ENCODE measurements at regions of chr9 and their contacts with region 1.

Region 1: GRCh38 chr9:114397848-114398605 is 10.2 kb upstream of the AKNA start:
- DNase-seq: peak; percentile 96
- ATAC-seq: peak; percentile 78
- H3K4me3 Mint-ChIP-seq: peak overlapping the region; percentile 89
- H3K27ac Mint-ChIP-seq: peak overlapping the region; percentile 94
- H3K4me1 Mint-ChIP-seq: peaks cover 49% of the 10 kb centered on the region
- H3K27me3 Mint-ChIP-seq: no peaks in the 10 kb centered on the region
- CTCF ChIP-seq: no peak

Region 2: DNA sequence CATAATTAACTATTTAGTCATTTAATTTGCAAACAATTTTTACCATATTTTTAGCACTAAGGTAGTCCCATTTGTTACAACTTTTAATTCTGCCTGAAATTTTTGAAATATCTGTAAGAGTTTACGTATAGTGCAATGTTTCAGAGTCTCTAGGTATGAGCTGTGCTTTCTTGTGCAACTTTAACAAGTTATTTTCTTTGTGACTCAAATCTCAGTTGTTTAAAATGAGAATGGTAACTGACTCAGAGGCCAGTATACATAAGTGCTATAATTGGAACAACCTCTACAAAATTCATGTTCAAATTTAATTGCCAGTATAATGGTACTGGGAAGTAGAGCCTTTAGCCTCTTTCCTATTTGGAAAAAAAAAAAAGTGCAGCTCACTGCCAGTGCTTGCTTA is 1371.8 kb before region 1 on chr9:
- CTCF ChIA-PET with region 1: no interaction called
- POLR2A ChIA-PET with region 1: no interaction called
- intact Hi-C with region 1: no loop called
- DNase-seq: no peak
- ATAC-seq: no peak
- H3K4me3 Mint-ChIP-seq: no peak overlapping the region
- H3K27ac Mint-ChIP-seq: no peak overlapping the region
- H3K4me1 Mint-ChIP-seq: no peaks in the 10 kb centered on the region
- H3K27me3 Mint-ChIP-seq: peaks cover 6% of the 10 kb centered on the region
- CTCF ChIP-seq: no peak

Region 3: DNA sequence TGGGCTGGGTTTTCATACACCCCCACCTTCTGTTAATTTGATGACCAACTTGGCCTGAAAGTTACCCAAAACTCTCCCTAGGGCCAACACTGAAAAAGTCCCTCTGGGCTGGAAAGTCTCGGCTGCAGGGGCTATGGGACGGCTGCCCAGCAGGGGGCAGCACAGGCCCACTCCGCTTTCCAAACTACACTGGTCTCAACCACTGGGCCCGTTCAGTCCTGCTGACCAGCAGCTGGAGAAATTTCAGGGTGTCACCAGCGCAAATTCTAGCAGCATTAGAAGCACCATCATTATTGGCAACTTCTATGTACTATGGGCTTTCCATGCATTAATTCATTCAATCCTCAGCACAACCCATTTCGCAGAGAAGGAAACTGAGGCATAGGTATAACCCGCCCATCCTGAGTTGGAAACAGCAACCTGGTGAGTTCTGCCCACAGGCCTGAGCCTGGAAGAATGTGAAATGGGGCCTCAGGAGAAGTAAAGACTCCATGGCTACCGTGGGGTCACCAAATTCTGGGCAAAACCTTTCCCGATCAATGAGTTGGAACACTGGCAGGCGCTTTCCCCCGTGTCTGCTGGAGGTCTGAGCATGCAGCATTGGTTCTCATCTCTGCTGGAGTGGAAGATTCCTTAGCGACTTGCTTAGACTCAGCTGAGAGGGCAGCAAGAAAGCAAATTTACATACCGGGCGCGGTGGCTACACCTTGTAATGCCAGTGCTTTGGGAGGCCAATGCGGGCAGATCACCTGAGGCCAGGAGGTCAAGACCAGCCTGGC is 58.7 kb before region 1 on chr9:
- CTCF ChIA-PET with region 1: interaction called, 8 read pairs
- POLR2A ChIA-PET with region 1: interaction called, 14 read pairs
- intact Hi-C with region 1: loop called (anchors 1 kb)
- DNase-seq: peak; percentile 68
- ATAC-seq: peak; percentile 79
- H3K4me3 Mint-ChIP-seq: peak overlapping the region; percentile 6
- H3K27ac Mint-ChIP-seq: peak overlapping the region; percentile 74
- H3K4me1 Mint-ChIP-seq: peaks cover 32% of the 10 kb centered on the region
- H3K27me3 Mint-ChIP-seq: no peaks in the 10 kb centered on the region
- CTCF ChIP-seq: peak; percentile 87

Region 4: DNA sequence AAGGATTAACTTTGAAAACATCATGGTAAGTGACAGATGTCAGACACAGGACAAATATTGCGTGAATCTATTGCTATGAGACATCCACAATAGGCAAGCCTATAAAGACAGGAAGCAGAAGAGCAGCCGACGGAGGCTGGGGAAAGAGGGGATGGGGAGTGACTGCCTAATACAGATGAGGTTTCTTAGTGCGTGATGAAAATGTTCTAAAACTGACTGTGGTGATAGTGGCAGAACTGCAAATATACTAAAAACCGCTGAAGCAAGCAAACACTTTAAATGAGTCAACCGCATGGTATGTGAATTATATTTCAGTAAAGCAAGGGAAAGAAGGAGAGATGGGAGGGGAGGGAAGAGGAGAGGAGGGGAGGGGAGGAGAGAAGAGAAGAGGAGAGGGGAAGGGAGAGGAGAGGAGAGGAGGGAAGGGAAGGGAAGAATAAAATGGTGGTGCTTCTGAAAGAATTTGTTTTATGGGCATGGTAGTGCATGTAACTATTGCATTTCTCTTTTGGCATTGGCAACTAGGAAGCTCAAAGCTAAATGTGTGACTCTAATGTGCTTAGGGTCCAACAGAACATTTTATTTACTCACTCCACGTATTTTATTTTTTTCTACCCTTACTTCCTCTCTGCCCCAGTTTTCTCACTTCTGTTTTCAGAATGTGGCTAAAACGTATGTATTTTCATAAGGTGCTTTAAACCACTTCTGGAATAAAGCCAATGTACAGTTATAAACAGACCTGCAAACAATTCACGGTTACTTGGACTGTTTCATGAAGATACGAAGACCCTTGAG is 31.5 kb before region 1 on chr9:
- CTCF ChIA-PET with region 1: interaction called, 4 read pairs
- POLR2A ChIA-PET with region 1: interaction called, 913 read pairs
- intact Hi-C with region 1: loop called (anchors 1 kb)
- DNase-seq: no peak
- ATAC-seq: peak; percentile 41
- H3K4me3 Mint-ChIP-seq: peak overlapping the region; percentile 69
- H3K27ac Mint-ChIP-seq: peak overlapping the region; percentile 91
- H3K4me1 Mint-ChIP-seq: peaks cover 90% of the 10 kb centered on the region
- H3K27me3 Mint-ChIP-seq: no peaks in the 10 kb centered on the region
- CTCF ChIP-seq: no peak

Region 5: DNA sequence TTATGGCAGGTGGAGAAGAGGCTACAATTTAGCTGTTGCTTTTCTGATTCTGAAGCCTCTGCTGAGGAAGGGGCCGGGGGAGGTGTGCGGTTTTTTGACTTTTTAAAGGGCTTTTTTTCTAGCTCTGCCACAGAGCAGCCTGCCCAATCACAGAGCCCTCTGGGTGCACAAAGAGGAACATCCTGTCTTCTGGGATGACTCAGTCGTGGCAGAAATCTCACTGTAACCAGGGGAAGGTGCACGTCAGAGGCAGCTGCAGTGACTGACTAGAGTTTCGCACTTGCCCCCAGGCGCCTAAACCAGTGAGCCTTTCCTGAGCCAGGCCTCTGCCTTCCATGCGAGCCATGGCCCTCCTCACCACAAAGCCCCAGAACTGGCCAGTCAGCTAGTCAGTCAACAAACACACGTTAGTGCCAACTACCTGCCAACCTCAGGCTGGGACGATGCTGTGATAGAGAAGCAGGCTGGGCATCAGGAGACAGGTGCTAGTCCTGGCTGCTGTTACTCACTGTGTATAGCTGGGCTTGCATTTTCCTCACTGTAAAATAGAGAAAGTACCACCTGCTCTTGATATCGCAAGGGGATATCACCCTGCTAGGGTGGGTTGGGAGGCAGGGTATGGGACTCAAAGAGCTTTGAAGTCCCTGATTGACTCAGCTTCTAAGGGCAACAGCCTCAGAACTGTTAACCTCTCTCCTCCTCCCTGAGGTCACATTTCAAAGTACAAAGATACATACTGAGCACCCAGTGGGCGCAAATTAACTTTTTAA is 12.4 kb before region 1 on chr9:
- CTCF ChIA-PET with region 1: interaction called, 11 read pairs
- POLR2A ChIA-PET with region 1: interaction called, 311 read pairs
- intact Hi-C with region 1: loop called (anchors 1 kb)
- DNase-seq: peak; percentile 71
- ATAC-seq: peak; percentile 77
- H3K4me3 Mint-ChIP-seq: peak overlapping the region; percentile 97
- H3K27ac Mint-ChIP-seq: peak overlapping the region; percentile 93
- H3K4me1 Mint-ChIP-seq: peaks cover 85% of the 10 kb centered on the region
- H3K27me3 Mint-ChIP-seq: no peaks in the 10 kb centered on the region
- CTCF ChIP-seq: no peak

Region 6: DNA sequence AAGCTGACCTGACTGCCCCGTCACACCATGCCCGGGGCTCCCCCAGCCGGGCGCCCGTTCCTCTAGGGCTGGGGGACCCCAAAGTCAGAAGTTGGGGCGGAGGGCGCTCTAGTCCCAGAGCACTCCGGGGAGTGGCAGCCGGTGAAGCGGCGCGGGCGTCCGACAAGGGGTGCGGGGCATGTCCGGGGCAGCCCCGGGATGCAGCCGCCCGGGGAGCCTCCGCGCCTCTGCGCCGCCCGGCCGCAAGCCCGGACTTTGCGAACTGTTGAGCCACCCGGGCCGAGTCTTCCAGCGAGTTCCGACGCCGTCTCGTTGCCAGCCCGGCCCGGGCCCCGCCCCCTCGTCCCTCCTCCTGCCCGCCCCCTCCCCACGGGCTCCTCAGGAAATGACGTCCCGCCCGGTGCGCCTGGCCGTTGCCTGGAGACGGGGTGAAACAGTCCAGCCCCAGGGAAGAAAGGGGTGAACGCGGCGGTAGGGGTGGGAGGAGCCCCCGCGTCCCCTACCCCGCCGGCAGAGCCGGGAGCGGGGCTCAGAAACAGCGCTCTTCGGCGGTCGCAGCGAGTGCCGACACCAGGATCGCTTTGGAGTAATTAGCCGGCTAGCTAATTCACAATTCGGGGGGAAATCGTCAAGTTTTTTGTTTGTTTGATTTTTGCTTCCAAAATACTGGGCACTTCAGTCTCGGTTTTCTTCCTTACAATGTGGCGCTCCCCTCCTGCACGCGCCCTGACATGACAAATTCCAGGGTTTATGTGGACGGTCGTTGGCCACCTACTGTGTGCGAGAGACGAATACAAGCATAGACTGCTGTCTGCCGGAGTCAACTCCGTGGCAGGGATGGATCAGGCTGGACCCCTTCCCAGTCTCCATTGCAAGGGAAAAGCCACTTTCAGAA is 107.4 kb after region 1 on chr9 and contains the start of gene WHRN:
- CTCF ChIA-PET with region 1: interaction called, 3 read pairs
- POLR2A ChIA-PET with region 1: interaction called, 5 read pairs
- intact Hi-C with region 1: loop called (anchors 1 kb)
- DNase-seq: peak; percentile 84
- ATAC-seq: peak; percentile 85
- H3K4me3 Mint-ChIP-seq: peak within 1 kb of the TSS; percentile 86
- H3K27ac Mint-ChIP-seq: peak within 1 kb of the TSS; percentile 79
- H3K4me1 Mint-ChIP-seq: peaks cover 51% of the 10 kb centered on the region
- H3K27me3 Mint-ChIP-seq: peaks cover 8% of the 10 kb centered on the region
- CTCF ChIP-seq: no peak
- total RNA-seq, gene WHRN: 12.4 and 14.5 TPM in 2 replicates

Region 7: GRCh38 chr9:114616653-114617520 is 218.9 kb after region 1 on chr9:
- CTCF ChIA-PET with region 1: no interaction called
- POLR2A ChIA-PET with region 1: interaction called, 10 read pairs
- intact Hi-C with region 1: loop called (anchors 1 kb)
- DNase-seq: peak; percentile 73
- ATAC-seq: peak; percentile 76
- H3K4me3 Mint-ChIP-seq: peak overlapping the region; percentile 74
- H3K27ac Mint-ChIP-seq: peak overlapping the region; percentile 98
- H3K4me1 Mint-ChIP-seq: peaks cover 83% of the 10 kb centered on the region
- H3K27me3 Mint-ChIP-seq: no peaks in the 10 kb centered on the region
- CTCF ChIP-seq: no peak

Measured in activated B cell treated with CpG ODN at 0.5 μM for 24 hours (primary cell).